Activated CD4-positive, alpha-beta T cell treated with anti-CD3 and anti-CD28 coated beads for 36 hours (primary cell): ENCODE measurements at regions of chr19 and their contacts with region 1.

Region 1: DNA sequence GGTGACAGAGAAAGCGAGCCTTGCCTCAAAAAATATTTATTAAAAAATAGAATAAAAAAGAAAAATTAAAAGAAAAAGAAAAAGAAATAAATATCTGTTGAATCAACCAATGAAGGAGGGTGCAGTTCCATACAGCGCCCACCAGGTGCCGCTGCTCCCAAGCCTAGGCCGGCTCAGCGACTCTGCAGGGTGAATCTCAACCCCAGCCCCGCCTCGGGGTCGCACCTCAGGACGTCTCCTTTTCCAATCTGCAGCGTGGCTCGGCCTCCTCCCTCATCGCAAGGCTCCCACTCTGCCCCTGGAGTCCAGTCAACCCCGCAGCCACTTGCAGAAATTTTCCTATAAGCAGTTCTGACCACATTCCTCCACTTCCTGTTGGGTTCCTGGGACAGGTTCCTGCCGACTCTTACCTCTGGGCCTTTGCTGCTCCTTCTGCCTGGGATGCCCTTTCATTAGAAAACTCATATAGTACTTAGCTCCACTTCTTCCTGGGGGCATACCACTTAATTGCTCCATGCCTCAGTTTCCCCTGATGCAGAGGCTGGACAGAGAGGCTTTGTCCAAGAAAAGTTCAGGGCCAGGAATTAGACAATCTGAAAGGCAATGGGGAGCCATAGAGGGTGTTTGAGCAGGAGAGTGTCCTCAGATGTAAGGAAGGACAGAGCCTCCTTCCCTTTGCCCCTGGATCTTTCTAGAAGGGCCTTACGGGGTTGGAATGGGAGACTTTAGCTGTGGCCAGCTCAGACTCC is 24.3 kb downstream of the NFILZ start:
- DNase-seq: peak; percentile 81
- ATAC-seq: peak; percentile 75
- H3K4me3 Mint-ChIP-seq: peak overlapping the region; percentile 27
- H3K27ac Mint-ChIP-seq: no peak overlapping the region
- H3K4me1 Mint-ChIP-seq: peaks cover 9% of the 10 kb centered on the region
- H3K27me3 Mint-ChIP-seq: no peaks in the 10 kb centered on the region

Region 2: DNA sequence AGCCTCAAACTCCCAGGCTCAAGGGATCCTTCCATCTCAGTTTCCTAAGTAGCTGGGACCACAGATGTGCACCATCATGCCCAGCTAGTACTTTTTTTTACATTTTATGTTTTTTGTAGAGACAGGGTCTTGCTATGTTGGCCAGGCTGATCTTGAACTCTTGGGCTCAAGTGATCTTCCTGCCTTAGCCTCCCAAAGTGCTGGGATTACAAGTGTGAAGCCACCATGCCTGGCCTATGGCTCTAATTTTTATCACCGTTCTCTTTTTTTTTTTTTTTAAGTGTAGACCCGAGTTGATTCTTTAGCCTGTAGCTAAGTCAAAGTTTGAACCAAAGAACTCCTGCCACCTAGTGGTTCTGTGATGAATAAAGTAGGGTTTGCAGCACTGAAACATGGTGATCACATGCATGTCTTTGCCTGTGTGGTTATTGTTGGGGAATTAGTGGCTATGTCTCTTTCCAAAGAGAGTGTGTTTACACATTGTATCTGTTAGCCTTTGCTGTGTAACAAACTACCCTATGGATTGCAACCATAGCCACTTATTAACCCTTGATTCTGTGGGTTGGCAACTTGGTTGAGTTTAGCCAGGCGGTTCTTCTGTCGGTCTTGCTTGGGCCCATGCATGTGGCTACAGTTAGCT is 12.7 kb before region 1 on chr19:
- CTCF ChIA-PET with region 1: interaction called, 14 read pairs
- POLR2A ChIA-PET with region 1: no interaction called
- intact Hi-C with region 1: no loop called
- DNase-seq: no peak
- ATAC-seq: peak; percentile 57
- H3K4me3 Mint-ChIP-seq: no peak overlapping the region
- H3K27ac Mint-ChIP-seq: no peak overlapping the region
- H3K4me1 Mint-ChIP-seq: peaks cover 3% of the 10 kb centered on the region
- H3K27me3 Mint-ChIP-seq: peaks cover 8% of the 10 kb centered on the region

Region 3: DNA sequence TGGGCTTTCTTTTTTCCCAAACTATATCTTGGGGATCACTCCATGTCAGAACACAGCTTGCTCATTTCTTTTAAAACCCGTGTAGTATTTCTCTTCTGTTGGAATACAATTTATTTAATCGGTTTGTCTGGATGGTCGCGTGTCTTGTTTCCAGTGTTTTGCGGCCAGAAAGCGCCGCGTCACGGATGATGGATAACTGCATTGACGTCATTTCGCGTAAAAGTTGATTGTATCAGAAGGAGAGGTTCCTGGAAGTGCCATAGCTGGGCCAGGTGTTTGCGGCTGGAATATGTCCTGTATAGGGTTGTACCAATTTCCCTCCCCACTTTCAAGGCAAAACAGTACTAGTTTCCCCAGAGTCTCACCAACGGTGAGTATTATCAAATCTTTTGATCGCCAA is 34.2 kb after region 1 on chr19:
- CTCF ChIA-PET with region 1: interaction called, 43 read pairs
- POLR2A ChIA-PET with region 1: no interaction called
- intact Hi-C with region 1: loop called (anchors 1 kb)
- DNase-seq: no peak
- ATAC-seq: no peak
- H3K4me3 Mint-ChIP-seq: no peak overlapping the region
- H3K27ac Mint-ChIP-seq: no peak overlapping the region
- H3K4me1 Mint-ChIP-seq: no peaks in the 10 kb centered on the region
- H3K27me3 Mint-ChIP-seq: peaks cover 2% of the 10 kb centered on the region

Region 4: DNA sequence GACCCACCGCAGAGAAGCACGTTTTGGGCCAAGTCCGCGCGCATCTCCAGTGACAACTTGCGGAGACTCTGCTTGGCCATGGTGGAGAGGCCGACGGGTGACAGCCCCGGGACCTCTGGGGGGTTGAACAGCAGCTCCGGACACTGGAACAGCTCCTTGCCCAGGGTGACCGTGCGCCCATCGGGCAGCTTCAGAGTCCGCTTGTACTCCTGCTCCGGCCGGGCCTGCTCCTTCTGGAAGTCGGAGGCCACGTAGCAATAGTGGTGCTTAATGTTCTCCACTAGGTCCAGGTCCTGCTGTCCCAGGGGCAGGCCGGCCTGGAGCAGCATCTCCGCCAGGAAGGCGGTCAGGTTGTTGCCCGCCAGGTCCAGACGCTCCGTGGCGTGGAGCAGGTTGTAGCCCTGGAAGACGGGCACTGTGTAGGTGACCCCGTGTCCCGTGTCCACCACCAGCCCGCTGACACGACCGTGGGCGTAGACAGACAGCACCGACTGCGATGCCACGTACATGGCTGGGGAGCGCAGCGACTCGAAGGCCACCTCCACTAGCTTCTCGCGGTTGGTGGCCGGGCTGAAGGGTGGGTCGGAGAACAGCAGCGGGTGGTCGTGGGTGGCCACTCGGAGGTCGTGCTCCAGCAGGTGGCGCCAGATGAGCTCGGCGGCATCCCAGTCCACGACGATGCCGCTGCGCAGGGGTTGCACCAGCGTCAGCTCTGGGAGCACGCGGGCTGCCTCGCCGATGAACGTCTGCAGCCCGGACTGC is 43.1 kb after region 1 on chr19:
- CTCF ChIA-PET with region 1: interaction called, 43 read pairs
- POLR2A ChIA-PET with region 1: no interaction called
- intact Hi-C with region 1: loop called (anchors 1 kb)
- DNase-seq: peak; percentile 51
- ATAC-seq: no peak
- H3K4me3 Mint-ChIP-seq: no peak overlapping the region
- H3K27ac Mint-ChIP-seq: no peak overlapping the region
- H3K4me1 Mint-ChIP-seq: peaks cover 20% of the 10 kb centered on the region
- H3K27me3 Mint-ChIP-seq: peaks cover 4% of the 10 kb centered on the region

Region 5: DNA sequence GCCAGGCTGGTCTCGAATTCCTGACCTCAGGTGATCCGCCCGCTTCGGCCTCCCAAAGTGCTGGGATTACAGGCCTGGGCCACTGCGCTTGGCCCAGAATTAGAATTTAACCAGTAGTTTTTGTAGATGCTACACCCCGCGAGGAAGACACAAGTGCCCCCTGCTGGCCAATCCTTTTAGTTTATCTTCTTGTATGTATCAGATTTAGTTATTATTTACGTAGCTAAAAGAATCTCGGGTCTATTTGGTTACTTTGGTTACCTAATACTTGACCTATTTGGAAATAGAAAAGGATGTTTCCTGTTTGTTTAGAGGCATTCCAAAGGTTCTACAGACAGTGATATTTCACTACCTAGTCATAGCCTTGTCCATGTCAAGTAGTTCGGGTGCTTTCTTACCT is 333.4 kb after region 1 on chr19:
- CTCF ChIA-PET with region 1: no interaction called
- POLR2A ChIA-PET with region 1: no interaction called
- intact Hi-C with region 1: loop called in 1 of 2 experiments (anchors 5 kb)
- DNase-seq: peak; percentile 68
- ATAC-seq: no peak
- H3K4me3 Mint-ChIP-seq: no peak overlapping the region
- H3K27ac Mint-ChIP-seq: no peak overlapping the region
- H3K4me1 Mint-ChIP-seq: no peaks in the 10 kb centered on the region
- H3K27me3 Mint-ChIP-seq: no peaks in the 10 kb centered on the region

Region 6: GRCh38 chr19:9075064-9075949 is 420.5 kb after region 1 on chr19:
- CTCF ChIA-PET with region 1: no interaction called
- POLR2A ChIA-PET with region 1: no interaction called
- intact Hi-C with region 1: loop called in 1 of 2 experiments (anchors 1 kb)
- DNase-seq: no peak
- ATAC-seq: no peak
- H3K4me3 Mint-ChIP-seq: no peak overlapping the region
- H3K27ac Mint-ChIP-seq: no peak overlapping the region
- H3K4me1 Mint-ChIP-seq: no peaks in the 10 kb centered on the region
- H3K27me3 Mint-ChIP-seq: no peaks in the 10 kb centered on the region